Heart right ventricle (tissue), 16 donors: ENCODE measurements at regions of chr1 and their contacts with region 1.

Region 1: DNA sequence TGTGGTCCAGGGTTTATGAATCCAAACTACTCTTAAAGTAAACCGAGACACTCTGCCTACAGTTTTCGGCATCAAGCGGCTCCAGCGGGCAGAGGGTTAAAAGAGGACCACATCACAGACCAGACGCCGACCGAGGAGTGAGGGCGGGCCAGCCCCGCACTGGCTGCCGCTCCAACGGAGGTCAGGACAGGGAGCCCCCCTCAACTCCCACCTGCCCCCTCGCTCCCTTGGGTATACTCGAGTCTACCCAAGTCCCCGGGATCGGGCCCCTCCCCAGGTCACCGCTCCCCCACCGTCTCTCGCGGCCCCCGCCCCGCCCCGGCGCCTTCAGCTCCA is 312 bp downstream of the ARNT start:
- DNase-seq: no peak
- ATAC-seq: peak; percentile 62 to 82 (median 66)
- H3K4me3 ChIP-seq: peak overlapping the region; percentile 48 to 98 (median 89)
- H3K27ac ChIP-seq: peak overlapping the region; percentile 87 to 99 (median 96)
- H3K4me1 ChIP-seq: peaks cover 0 to 45% (median 22%) of the 10 kb centered on the region in 9 donors
- H3K27me3 ChIP-seq: no peaks in the 10 kb centered on the region
- CTCF ChIP-seq: no peak

Region 2: DNA sequence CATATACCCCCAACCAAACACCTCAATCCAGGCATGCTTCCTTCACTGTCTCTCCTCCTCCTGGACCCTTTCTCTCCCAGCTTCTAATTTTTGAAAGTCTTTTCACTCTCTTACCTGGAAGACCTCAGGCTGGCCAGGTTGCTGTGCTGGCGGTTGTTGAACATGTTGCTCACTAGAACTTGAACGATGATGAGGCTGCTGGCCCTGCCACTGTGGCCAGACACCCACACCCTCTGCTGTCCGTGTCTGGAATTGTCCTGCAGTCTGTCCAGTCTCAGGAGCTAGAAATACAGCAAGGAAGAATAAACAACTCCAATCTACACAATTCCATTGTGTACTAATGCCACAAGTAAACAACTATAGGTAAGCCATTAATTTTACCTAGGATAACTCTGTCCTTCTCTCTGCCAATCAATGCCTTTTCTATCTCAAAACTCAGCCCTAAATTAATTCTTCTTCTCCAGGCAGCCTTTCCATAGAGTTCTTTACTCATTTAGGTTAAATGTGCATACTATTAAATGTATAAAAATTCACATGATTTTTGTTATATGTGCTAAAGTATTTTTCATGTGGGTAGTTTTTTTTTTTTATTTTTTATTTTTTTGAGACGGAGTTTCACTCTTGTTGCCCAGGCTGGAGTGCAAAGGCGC is 62.9 kb before region 1 on chr1:
- intact Hi-C with region 1: loop called in 1 of 10 experiments (anchors 10 kb)
- DNase-seq: peak; percentile 45
- ATAC-seq: peak in 6 of 8 donors; percentile 65 to 85 (median 72)
- H3K4me3 ChIP-seq: no peak overlapping the region
- H3K27ac ChIP-seq: no peak overlapping the region
- H3K4me1 ChIP-seq: peaks cover 0 to 11% (median 0%) of the 10 kb centered on the region in 9 donors
- H3K27me3 ChIP-seq: no peaks in the 10 kb centered on the region
- CTCF ChIP-seq: peak; percentile 25 to 74 (median 58)